Heart left ventricle (tissue), 16 donors: ENCODE measurements at regions of chr3 and their contacts with region 1.

Region 1: DNA sequence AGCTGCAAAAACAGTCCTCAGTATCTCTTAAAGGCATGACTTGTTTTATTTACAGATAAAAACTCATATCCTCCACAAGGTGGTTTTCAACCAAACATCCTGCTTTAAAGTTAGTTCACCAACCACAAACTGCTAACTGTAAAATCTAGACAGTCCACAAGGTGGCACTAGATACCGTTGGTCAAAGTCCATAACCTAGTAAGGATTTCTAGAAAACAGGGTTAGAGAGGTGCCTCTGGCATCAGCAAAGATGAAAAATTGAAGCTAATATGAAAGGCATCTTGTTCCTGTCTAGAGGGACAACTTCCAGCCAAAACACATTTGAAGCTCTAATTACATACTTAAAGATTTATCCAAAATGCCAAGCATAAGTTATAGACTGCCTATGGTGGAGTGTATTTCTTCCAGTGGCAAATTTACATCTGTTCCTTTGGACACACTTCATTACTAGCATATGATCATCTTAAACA is 56.0 kb downstream of the ZMAT3 start:
- DNase-seq: peak in 2 of 5 donors; percentile 32 to 34
- ATAC-seq: peak in 3 of 4 donors; percentile 69 to 77 (median 70)
- H3K4me3 ChIP-seq: no peak overlapping the region
- H3K27ac ChIP-seq: no peak overlapping the region
- H3K4me1 ChIP-seq: peaks cover 0 to 10% (median 9%) of the 10 kb centered on the region in 12 donors
- H3K27me3 ChIP-seq: no peaks in the 10 kb centered on the region
- CTCF ChIP-seq: peak; percentile 75 to 94 (median 86)
- POLR2A ChIP-seq: no peak

Region 2: DNA sequence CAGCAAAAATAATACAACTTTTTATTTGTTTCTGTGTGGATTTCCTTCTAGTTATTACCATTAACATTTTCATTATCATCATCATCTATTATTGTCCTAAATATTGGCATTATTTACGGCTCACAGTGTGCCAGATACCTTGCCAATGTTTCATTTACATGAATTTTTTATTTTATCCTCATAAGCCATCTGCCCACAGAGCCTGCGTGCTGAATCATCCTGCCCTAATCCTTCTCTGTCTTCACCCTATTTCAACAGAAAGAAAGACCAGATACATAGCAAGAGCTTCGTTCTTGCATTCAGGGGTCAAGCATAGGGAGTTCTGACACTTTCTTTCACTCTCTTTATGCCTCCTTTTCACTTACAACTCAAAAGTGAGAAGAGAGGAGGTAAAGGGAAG is 397.4 kb before region 1 on chr3:
- intact Hi-C with region 1: no loop called
- DNase-seq: no peak
- ATAC-seq: peak in 2 of 4 donors; percentile 34 to 80
- H3K4me3 ChIP-seq: peak overlapping the region in 9 of 12 donors; percentile 4 to 43 (median 26)
- H3K27ac ChIP-seq: peak overlapping the region in 6 of 12 donors; percentile 0 to 57 (median 26)
- H3K4me1 ChIP-seq: peaks cover 0 to 13% (median 0%) of the 10 kb centered on the region in 12 donors
- H3K27me3 ChIP-seq: no peaks in the 10 kb centered on the region
- CTCF ChIP-seq: no peak
- POLR2A ChIP-seq: no peak

Region 3: DNA sequence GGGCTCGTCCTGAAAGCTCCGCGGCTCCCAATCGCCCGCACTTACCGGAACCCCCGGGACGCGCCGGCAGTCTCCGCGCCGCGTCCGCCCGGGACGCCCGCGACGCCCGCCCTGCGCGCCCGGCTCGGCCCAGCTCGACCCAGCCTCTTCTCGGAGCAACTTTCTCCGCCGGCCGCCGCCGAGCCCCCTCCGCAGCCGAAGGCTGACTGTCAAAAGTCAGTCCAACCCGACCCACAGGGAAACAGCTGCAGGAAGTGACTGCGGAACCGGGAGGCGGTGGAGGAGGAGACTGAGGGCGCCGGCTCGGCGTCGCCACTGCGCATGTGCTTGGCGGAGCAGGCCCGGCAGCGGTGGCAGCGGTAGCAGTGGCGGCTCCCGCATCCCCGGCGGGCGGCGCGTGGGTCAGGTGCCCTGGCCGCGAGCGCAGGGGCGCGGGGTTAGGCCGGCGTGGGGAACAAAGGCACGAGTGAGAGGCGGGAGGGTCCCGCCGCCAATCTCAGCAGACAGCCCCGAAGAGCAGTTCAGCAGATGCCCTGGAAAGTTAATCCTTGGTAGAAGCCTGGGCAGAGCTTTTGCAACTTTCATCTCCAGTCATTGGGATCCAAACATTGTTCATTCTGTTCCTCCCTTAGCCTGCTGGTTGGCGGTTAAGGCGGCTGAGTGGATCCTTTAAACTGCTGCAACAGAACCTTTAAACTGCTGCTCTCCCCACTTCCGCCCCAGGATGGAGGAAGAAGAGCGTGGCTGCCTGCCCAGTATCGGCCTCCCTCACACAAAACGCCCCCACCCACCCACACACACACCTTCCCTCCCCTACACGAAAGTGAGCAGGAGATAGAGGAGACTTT is 56.2 kb after region 1 on chr3 and contains the start of gene ZMAT3:
- intact Hi-C with region 1: loop called in 6 of 10 experiments (anchors 2 to 10 kb)
- DNase-seq: peak; percentile 92 to 95 (median 93)
- ATAC-seq: peak; percentile 78 to 99 (median 98)
- H3K4me3 ChIP-seq: peak within 1 kb of the TSS; percentile 49 to 96 (median 84)
- H3K27ac ChIP-seq: peak within 1 kb of the TSS; percentile 59 to 95 (median 90)
- H3K4me1 ChIP-seq: peaks cover 0 to 42% (median 21%) of the 10 kb centered on the region in 12 donors
- H3K27me3 ChIP-seq: no peaks in the 10 kb centered on the region
- CTCF ChIP-seq: peak in 2 of 12 donors; percentile 8 to 14
- POLR2A ChIP-seq: peak in 1 of 2 donors; percentile 79
- total RNA-seq, gene ZMAT3: 10.5 to 23.2 (median 15.6) TPM

Region 4: DNA sequence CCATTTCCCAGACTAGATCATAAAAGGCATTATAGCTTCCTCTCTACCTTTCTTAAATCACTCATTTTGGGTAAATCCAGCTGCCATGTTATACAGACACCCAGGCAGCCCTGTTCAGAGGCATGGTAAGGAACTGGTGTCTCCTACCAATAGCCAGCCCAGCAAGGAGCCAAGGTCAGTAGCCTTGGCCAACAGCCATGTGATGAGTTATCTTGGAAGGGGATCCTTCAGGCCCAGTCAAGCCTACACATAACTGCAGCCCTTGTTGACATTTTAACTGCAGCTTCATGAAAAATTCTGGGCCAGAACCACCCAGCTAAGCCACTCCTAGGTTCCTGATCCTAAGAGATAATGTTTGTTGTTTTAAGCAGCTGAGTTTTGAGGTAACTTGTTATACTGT is 85.1 kb after region 1 on chr3:
- intact Hi-C with region 1: loop called in 5 of 10 experiments (anchors 5 to 10 kb)
- DNase-seq: no peak
- ATAC-seq: no peak
- H3K4me3 ChIP-seq: no peak overlapping the region
- H3K27ac ChIP-seq: no peak overlapping the region
- H3K4me1 ChIP-seq: no peaks in the 10 kb centered on the region
- H3K27me3 ChIP-seq: peaks cover 0 to 4% (median 0%) of the 10 kb centered on the region in 9 donors
- CTCF ChIP-seq: no peak
- POLR2A ChIP-seq: no peak

Region 5: DNA sequence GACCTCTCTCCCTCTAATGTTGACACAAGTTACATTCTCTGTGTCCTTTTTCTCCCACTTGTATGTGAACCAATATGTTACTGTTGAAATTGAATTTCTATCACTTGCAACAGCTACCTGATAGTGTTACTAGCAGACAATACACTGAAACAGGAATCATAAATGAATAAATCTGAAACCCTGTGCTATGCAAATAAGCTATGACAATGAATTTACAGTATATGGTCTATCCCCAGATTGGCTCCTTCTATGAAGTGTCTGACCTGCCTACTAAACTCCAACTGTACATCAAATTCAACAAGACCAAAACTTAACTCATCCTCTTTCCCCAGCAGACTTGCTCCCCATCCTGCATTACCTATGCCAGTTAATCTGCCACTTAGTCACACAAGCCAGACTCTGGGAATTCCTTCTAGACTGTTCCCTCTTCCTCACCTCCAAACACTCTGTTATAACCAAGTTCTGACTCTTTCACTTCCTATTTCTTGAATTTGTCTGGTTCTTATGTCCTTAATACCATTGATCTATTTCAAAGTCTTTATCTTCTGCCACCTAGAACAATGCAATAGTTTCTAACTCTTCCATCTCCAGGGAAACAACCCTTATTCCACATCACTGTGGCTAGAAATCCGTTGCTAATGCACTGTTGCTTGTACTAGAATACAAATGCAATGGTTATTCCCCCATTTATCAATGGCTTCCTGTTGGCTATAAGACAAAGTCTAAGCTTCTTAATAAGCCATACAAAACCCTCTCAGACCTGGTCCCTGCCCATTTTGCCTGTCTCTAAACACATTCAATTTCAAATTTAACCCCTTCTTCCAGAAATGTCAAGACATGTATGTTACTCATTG is 293.9 kb after region 1 on chr3:
- intact Hi-C with region 1: loop called in 2 of 10 experiments (anchors 2 kb)
- DNase-seq: no peak
- ATAC-seq: no peak
- H3K4me3 ChIP-seq: no peak overlapping the region
- H3K27ac ChIP-seq: no peak overlapping the region
- H3K4me1 ChIP-seq: no peaks in the 10 kb centered on the region
- H3K27me3 ChIP-seq: peaks cover 0 to 4% (median 0%) of the 10 kb centered on the region in 9 donors
- CTCF ChIP-seq: no peak
- POLR2A ChIP-seq: no peak